ENCODE measurements at regions of chr1 and their contacts with region 1.

Region 1: DNA sequence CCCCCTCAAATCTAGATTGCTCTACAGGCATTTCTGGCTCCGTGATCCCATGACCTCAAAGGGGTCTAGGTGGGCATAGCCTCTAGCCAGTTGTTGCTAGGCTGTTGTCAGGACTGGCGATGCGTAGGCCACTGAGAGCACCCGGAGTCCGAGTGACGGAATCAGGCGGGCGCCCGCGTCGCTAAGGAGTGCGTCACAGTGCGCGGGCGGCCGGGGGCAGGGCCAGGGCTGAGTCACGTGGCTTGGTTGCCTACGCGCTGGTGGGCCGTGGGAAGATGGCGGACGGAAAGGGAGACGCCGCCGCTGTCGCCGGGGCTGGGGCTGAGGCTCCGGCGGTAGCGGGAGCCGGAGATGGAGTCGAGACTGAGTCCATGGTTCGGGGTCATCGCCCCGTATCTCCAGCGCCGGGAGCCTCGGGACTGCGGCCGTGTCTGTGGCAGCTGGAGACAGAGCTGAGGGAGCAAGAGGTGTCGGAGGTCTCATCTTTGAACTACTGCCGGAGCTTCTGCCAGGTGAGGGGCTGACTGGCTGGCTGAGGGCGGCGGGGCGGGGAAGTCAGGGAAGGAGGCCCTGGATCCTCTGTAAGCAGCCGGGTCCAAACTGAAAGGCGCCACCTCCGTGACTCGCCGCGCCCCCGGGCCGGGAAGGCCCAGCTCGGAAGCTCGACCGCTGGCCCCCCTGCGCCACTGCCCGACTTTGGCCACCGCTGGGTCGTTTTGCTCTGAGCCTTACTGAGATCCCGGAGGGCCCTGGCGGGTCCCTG is at the start of gene RLF:
- DNase-seq: peak; percentile 94 to 95
- ATAC-seq: peak; percentile 99 to 100 (median 100)
- H3K4me3 ChIP-seq: peak within 1 kb of the TSS; percentile 59 to 97 (median 90)
- H3K27ac ChIP-seq: peak within 1 kb of the TSS; percentile 59 to 98 (median 92)
- H3K4me1 ChIP-seq: peaks cover 0 to 48% (median 40%) of the 10 kb centered on the region in 9 donors
- H3K27me3 ChIP-seq: no peaks in the 10 kb centered on the region
- CTCF ChIP-seq: no peak
- total RNA-seq, gene RLF: 10.2 to 17.3 (median 12.6) TPM

Region 2: DNA sequence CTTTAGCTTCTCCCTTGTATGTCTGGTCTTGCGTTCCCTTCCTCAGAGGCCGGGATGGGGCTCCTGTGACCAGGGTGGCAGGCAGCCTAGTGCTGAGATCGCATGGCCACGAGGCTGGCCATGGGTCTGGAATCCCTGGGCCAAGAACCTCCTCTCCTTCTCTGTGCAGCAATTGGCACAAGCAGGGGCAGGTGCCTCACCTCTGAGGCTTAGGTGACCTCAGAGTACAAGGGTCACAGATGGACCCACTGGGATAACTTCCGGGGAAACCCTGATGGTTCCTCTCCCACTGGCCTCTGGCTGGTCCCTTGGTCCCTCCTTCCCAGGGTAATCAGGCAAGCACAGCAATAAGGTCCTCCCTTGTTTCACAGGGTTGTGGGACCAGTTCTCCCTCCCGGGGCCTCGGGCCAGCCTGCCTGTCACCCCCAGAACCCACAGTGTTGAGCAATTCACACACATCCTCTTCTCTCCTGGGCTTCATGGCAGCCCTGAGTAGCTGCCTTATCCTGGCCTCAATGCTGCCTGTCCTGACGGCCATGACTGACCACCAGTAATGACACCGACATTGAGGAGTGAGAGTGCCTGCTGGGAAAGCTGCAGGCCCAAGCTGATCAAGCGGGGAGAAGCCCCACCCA is 631.3 kb before region 1 on chr1:
- intact Hi-C with region 1: no loop called
- DNase-seq: no peak
- ATAC-seq: no peak
- H3K4me3 ChIP-seq: no peak overlapping the region
- H3K27ac ChIP-seq: no peak overlapping the region
- H3K4me1 ChIP-seq: no peaks in the 10 kb centered on the region
- H3K27me3 ChIP-seq: no peaks in the 10 kb centered on the region
- CTCF ChIP-seq: no peak

Region 3: DNA sequence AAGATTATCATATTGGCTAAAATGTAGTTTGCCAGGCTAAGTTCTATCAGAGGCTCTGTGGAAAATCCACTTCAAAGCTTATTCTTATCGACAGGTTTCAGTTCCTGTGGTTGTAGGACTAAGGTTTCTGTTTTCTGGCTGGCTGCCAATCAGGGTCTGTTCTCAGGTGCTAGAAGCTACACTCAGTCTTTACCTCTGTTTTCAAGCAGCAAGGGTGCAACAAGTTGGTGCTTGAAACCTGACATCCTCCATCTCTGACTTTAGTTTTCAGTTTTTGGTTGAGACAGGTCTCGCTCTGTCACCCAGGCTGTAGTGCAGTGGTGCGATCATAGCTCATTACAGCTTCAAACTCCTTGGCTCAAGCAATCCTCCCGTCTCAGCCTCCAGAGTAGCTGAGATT is 71.1 kb after region 1 on chr1:
- intact Hi-C with region 1: loop called in 1 of 10 experiments (anchors 10 kb)
- DNase-seq: no peak
- ATAC-seq: no peak
- H3K4me3 ChIP-seq: no peak overlapping the region
- H3K27ac ChIP-seq: no peak overlapping the region
- H3K4me1 ChIP-seq: no peaks in the 10 kb centered on the region
- H3K27me3 ChIP-seq: no peaks in the 10 kb centered on the region
- CTCF ChIP-seq: no peak

Region 4: DNA sequence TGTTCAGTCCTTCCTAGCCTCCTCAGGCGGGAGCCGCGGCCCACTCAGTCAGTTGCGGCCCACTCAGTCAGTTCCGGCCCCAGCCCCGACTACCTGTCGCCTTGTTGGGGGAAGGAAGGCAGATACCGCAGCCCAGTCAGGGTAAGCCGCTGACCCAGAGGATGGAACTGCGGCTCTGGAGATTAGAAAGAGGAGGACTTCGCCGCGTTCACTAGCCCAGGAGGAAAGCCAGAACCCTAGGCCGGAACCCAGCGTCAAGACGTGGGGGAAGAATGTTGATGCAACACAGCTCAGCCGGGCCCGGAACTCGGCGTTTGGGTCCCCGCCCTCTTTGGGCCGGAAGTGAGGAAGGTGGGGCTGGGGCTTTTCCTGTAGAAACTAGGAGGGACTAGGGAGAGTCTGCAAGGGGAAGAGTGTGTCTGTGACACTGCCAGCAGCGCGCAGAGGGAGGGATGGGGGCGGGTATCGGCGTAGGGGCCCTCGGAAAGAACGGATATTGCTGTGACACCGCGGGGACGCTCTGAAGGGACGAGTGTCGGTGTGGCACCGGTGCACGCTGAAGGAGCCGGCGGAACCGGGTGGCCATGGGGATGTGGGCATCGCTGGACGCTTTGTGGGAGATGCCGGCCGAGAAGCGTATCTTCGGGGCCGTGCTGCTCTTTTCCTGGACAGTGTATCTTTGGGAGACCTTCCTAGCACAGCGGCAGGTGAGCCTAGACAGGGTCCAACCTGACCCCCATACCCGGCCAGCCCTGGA is 96.6 kb after region 1 on chr1 and contains the start of gene ZMPSTE24:
- intact Hi-C with region 1: loop called in 3 of 10 experiments (anchors 2 to 5 kb)
- DNase-seq: peak; percentile 93 to 98
- ATAC-seq: peak; percentile 99 to 100 (median 100)
- H3K4me3 ChIP-seq: peak within 1 kb of the TSS; percentile 71 to 100 (median 93)
- H3K27ac ChIP-seq: peak within 1 kb of the TSS; percentile 80 to 98 (median 90)
- H3K4me1 ChIP-seq: peaks cover 0 to 61% (median 37%) of the 10 kb centered on the region in 9 donors
- H3K27me3 ChIP-seq: no peaks in the 10 kb centered on the region
- CTCF ChIP-seq: no peak
- total RNA-seq, gene ZMPSTE24: 19.9 to 47.5 (median 30.2) TPM

Region 5: DNA sequence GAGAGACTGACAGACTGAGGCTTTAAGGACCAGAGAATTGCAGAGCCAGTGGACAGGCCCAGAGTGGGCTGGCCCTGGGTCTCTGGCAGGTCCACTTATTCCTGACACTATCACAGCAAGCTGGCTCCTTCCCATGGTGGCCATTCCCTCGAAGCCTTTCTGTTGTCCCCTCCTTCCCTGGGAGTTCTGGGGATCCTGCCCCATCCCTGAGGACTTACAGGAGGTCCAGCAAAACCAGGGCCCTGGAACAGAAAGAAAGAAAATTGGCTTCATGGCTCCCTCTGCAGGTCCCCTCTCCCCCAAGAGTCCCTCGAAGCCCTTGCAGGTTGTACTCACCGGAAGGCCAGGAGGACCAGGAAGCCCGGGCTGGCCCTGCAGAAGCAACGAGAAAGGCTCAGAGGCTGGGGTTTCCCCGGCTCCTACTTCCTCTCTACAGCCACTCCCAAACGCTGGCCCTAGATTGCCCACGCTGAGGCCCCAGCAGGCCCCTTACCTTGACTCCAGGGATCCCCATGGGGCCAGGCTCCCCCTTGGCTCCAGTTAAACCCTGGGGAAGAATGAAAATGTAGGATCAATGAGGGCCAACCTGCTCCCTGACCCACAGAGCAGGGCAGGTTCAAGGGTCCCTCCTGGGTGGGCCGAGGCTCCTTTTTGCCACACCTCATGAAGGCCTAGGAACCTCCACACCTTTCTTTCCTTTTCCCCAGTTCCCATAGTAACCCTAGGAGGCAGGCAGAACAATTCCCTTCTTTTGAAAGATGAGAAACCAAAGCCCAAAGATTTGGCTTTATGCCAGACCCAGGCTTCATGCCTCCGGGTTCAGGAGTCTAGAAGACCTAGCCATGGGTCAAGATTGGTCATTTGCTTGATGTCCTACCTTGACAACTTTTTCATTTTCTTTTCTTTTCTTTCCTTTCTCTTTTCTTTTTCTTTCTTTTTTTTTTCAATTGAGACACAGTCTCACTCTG is 151.2 kb after region 1 on chr1:
- intact Hi-C with region 1: loop called in 1 of 10 experiments (anchors 5 kb)
- DNase-seq: no peak
- ATAC-seq: no peak
- H3K4me3 ChIP-seq: no peak overlapping the region
- H3K27ac ChIP-seq: peak overlapping the region in 1 of 10 donors; percentile 20
- H3K4me1 ChIP-seq: peaks cover 8 to 39% (median 28%) of the 10 kb centered on the region in 9 donors
- H3K27me3 ChIP-seq: peaks cover 7 to 34% (median 21%) of the 10 kb centered on the region in 7 donors
- CTCF ChIP-seq: no peak